Aorta (tissue), 5 donors: ENCODE measurements at regions of chr18 and their contacts with region 1.

Region 1: DNA sequence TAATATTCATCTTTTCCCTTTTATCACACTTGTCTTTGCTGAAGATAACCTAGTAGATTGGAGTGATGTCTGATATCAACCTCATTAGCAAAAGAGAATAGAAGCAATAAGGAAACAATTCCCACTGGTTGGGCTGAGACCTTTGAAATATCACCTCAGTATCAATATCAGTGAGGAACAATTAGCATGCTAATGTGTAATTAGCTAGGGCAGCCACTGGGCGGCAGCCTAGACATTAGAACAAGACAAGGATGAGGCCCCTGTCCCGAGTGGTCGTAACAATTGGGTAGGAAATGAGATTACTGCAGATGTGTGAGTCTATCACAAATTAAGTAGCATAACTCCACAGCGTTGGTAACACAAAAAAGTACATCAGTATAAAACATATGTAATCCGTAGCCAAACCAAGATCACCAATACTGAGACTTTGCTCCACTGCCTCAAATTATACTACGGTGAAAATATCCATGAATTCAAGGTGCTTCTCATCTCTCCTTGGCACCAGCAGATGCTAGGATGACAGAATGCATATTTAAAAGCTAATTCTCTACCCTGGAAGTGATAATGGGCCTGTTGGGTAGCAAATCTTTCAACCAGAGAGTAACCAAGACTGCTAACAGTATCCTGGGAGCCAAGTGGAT is 99.1 kb downstream of the ALPK2 start:
- DNase-seq: peak in 1 of 2 donors; percentile 57
- ATAC-seq: no peak
- H3K4me3 ChIP-seq: no peak overlapping the region
- H3K27ac ChIP-seq: no peak overlapping the region
- H3K4me1 ChIP-seq: no peaks in the 10 kb centered on the region
- H3K27me3 ChIP-seq: no peaks in the 10 kb centered on the region

Region 2: GRCh38 chr18:58584200-58585127 is 54.6 kb after region 1 on chr18:
- intact Hi-C with region 1: no loop called
- DNase-seq: no peak
- ATAC-seq: no peak
- H3K4me3 ChIP-seq: no peak overlapping the region
- H3K27ac ChIP-seq: no peak overlapping the region
- H3K4me1 ChIP-seq: no peaks in the 10 kb centered on the region
- H3K27me3 ChIP-seq: no peaks in the 10 kb centered on the region

Region 3: DNA sequence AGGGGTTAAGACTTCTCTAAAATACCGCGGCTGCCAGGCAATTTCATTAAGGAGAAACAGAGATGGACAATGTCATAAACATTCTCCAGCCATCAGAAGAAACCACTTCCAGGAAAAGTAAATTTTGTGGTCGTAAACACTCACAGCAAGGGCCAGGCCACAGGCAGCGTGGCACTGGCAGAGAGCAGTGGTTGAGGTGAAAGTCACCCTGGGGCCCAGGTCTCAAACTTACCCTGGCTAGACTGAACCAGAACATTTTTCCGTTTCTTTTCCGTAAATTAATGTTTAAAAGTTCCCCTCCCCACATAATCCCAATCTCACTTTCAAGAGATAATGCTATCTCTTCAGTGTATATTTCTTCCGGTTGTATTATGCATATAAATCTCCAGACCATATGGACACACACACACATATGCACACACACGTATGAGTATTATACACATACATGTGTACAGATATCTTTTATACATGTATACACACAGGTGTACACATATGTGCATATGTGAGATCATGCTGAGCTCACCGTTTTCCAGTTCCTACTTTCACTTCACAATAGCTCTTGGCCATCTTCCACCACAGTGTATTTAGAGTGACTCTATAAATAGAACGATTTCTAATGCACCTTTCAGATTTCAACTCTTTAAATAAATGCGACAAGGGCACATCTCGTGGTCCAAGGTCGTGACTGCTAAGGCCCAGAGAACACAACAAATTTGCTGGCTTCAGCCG is 231.6 kb after region 1 on chr18:
- intact Hi-C with region 1: loop called in 1 of 2 experiments (anchors 5 kb)
- DNase-seq: no peak
- ATAC-seq: no peak
- H3K4me3 ChIP-seq: no peak overlapping the region
- H3K27ac ChIP-seq: no peak overlapping the region
- H3K4me1 ChIP-seq: no peaks in the 10 kb centered on the region
- H3K27me3 ChIP-seq: no peaks in the 10 kb centered on the region

Region 4: GRCh38 chr18:58887613-58887963 is 357.8 kb after region 1 on chr18:
- intact Hi-C with region 1: no loop called
- DNase-seq: peak; percentile 83 to 90
- ATAC-seq: peak; percentile 88
- H3K4me3 ChIP-seq: no peak overlapping the region
- H3K27ac ChIP-seq: peak overlapping the region; percentile 66 to 68
- H3K4me1 ChIP-seq: peaks cover under 1 to 9% of the 10 kb centered on the region in 2 donors
- H3K27me3 ChIP-seq: no peaks in the 10 kb centered on the region